Cardiac septum (tissue), 1 donor: ENCODE measurements at regions of chr3 and their contacts with region 1.

Region 1: DNA sequence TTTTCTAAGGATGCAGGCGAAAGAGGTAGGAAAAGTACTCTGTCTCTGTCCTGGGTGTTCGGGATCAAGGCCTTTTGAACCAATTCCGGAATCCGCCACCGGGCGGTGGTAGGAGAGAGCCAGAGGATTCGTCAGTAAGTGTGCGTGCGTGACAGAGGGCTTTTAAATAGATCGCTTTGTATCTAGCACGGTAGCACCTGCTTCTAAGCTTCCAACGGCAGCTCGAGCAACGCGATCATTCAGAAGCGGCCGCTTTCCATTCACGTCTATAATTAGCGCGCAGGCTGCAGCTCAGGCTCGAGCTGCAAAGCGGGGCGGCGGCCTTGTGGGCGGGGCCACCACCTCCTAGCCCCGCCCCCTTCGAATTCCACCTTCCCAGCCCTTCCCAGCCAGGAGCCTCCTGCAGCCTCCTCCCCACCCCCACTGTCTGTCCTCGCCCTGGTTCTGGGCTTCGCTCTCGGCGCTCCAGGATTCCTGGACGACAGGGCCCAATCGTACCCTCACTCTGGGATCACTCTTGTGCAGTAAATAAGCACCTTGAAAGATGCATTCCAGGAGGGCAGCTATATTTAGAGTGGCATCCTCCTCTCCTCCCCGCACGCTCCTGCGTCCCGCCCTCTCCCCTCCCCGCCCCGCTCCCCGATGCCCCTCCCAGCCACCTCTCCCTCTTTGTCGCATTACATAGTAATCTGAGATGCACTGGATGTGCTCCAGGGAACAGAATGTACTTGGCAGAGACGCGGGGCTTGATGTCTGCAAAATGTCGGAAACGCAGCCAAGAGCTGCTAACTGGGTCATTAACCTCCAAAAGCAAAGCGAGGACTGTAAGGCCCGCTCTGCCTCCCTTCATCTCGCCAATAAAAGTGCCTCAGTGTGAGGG is 224.1 kb upstream of the TPRG1 start:
- DNase-seq: peak; percentile 93

Region 2: DNA sequence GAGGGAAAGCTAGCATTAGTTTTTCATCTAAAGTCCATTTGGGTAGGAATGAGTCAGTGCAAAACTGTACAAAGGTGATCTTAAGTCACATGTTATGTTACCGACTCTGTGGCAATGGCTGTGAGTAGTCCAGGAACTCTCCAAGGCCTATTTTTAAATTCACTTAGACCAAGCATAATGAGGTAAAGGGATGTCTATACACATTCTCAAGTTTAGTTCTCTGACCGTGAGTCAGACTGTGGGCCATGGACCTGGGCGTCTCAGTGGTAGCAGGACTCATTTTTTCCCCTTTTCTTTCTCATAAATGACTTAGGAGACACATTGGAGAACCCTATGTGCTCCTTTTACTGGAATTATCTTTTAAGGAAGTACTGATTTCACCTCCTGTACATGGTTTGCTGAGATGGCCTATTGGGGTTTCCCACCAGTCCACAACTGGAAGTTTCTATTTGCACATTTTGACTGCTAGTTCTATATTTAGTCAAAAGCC is 264.6 kb before region 1 on chr3:
- intact Hi-C with region 1: loop called (anchors 5 kb)
- DNase-seq: no peak

Region 3: DNA sequence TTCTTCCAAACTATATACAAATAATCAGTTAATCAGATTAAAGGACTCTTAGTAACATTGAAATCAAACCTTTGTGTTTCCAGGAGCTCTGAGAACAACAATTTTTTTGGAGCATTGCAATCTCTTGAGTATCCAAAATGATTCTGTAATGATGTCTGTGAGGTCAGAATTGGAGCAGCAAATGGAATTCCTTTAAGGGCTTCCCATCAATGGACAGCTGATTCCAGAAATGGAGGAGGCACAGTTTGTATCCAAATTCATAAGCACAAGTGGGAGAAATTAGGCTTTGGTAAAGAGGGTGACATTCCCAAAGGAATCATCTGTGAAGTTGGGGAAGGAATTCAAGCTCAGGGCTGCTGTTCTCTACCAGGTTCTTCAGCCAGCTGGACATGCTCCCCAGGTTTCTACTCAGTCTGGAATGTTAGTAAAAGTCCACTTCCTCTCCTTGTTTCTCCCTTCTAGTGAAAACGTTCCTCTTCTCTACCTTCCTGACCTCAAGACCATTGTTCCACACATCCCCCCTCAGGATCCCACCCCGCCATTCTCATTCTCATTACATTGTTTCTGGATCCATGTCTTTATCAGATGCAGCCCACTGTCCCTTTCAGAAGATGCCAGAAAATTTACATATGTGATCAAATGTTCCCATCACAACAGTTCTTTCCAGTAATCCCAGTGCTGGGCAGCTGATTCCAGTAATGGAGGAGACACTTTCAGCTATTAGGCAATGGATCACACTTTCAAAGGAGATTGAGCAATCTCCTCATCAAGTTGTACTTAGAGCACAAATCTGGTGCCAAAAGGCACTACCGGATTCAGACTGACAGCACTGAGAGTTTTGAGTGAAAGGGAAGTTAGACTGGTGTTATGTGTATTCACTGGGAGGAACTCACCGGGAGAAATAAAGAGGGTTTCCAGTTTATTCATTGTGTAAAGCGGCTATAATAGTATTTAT is 167.2 kb before region 1 on chr3:
- intact Hi-C with region 1: loop called (anchors 5 kb)
- DNase-seq: no peak

Region 4: GRCh38 chr3:189027626-189028155 is 80.0 kb after region 1 on chr3:
- intact Hi-C with region 1: no loop called
- DNase-seq: no peak

Region 5: DNA sequence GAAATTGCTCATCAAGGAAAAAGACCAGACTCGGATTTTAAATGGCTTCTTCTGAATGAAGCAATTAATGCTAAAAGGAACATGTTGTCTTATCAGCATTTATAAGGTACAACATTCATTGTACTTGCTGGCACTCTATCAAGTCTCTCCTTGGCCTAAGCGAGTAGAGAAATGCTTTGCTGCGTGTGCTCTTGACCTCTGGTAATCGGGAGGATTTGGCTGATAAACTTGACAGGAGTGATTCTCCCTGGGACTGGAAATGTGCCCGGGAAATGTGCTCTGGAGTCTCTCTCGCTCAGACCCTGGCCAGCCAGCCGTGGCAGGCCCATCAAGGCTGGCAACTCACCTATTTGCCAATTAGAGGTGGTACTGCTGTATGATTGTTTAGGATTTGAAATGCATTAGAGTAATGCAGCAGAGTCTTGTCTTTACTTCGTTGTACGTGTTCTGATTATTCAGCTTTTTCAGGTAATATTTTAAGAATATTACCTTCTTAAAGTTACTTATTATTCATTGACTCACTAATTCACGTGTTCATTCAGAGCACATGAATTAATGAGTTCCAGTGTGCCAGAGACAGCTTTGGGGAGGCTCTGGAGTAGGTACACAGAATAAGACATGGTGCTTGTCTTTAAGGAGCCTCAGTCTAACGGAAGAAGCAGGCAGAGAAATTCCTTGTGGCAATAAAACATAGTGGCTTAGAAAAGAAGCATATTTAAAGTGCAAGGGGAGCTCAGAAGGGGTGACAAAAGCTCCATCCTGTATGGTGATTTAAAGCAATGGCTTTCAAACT is 176.2 kb after region 1 on chr3:
- intact Hi-C with region 1: no loop called
- DNase-seq: no peak